AG04450 (cell line): ENCODE measurements at regions of chr6 and their contacts with region 1.

Region 1: GRCh38 chr6:152316024-152316423 is 321.1 kb downstream of the SYNE1 start:
- DNase-seq: peak; percentile 36
- H3K4me3 ChIP-seq: no peak overlapping the region
- H3K27ac ChIP-seq: peak overlapping the region; percentile 41
- H3K27me3 ChIP-seq: no peaks in the 10 kb centered on the region
- CTCF ChIP-seq: no peak

Region 2: DNA sequence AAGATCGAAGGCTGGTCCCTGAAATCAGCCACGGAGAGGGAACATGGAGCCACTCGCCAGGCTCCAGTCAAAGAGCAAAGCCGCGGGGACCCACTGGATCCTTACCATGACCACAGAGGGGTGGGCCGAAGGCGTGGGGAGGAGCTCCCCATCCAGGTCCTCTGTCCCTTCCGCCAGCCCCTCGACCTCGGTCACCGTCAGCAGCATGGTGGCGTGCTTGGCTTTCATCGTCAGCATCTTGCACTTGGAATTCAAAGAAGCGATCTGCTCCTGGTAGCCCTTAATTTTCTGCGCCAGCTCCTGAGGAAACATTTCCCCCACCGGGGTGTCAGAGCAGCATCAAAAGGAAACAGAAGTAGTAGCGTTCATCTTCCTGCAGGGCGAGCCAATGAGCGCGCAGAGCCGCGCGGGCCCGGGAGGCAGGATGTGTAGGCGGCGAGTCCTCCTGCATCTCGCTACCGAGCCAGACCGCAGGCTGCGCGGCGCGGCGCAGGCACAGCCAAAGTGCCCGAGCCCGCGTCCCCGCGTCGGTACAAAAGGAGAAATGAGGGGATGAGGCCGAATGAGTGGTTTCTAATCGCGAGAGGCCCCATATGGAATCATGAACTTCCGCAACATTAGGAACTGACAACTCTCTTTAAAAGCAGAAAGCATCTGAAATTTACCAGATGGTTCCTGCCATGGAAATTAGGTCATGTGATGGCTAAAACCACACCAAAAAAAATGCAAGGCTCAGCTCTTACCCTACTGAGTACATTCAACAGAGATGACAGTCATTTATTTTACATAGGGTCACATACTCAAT is 14.1 kb before region 1 on chr6:
- CTCF ChIA-PET with region 1: interaction called, 14 read pairs
- POLR2A ChIA-PET with region 1: no interaction called
- DNase-seq: peak; percentile 78
- H3K4me3 ChIP-seq: peak overlapping the region; percentile 79
- H3K27ac ChIP-seq: peak overlapping the region; percentile 87
- H3K27me3 ChIP-seq: no peaks in the 10 kb centered on the region
- CTCF ChIP-seq: peak; percentile 60

Region 3: GRCh38 chr6:152598901-152599537 is 283.0 kb after region 1 on chr6:
- CTCF ChIA-PET with region 1: no interaction called
- POLR2A ChIA-PET with region 1: no interaction called
- DNase-seq: no peak
- H3K4me3 ChIP-seq: no peak overlapping the region
- H3K27ac ChIP-seq: no peak overlapping the region
- H3K27me3 ChIP-seq: no peaks in the 10 kb centered on the region
- CTCF ChIP-seq: no peak